Mammary epithelial cell (primary cell): ENCODE measurements at regions of chr5 and their contacts with region 1.

Region 1: GRCh38 chr5:141691867-141692532 is 10.0 kb upstream of the ARAP3 start:
- DNase-seq: peak; percentile 69
- H3K4me3 ChIP-seq: peak overlapping the region in 2 of 3 experiments; percentile 35 to 47
- H3K27ac ChIP-seq: no peak overlapping the region
- H3K4me1 ChIP-seq: peaks cover 4% of the 10 kb centered on the region
- H3K27me3 ChIP-seq: no peaks in the 10 kb centered on the region
- CTCF ChIP-seq: peak; percentile 87 to 96

Region 2: DNA sequence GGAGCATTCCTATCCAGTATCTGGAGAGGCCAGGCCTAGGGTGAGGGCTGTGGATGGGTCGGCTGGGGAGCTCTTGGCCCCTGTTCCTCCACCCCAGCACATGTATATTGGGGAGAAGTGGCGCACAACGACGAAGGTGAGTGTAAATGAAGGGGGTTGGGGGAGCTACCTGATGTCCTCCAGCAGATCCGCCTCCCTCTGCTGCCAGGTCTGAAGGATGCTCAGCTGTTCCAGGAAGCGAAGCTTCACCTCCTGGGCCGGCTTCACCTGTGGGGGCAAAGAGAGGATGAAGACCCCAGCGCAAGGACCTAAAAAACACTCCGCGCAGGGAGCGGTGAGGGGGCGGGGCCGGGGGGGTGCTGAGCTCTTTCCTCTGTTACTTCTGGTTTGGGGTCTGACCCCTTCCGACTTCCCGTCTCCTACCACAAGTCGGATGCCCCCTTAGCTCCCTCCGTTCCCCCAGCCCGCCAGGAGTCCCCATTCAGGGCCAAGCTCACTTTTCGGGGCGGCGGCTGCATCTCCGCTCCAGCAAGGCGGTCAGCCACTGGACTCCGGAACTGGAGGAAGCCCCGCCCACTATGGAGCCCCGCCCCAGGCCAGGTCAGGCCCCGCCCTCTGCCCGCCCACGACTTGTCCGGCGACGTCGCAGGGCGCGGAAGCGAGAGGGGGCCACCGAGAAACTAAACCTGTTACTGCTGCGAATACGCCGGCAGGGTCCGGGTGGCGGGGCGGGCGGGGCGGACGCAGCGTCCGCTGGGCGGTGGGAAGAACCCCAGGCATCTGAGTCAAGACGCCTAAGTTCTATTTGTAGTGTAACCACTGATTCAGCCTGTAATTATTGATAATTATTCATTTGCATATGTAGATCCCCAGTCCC is 40.9 kb before region 1 on chr5 and contains the start of gene FCHSD1:
- CTCF ChIA-PET with region 1: no interaction called
- dilution Hi-C with region 1: loop called (anchors 5 kb)
- in situ Hi-C with region 1: no loop called
- intact Hi-C with region 1: no loop called
- DNase-seq: peak; percentile 64
- H3K4me3 ChIP-seq: peak within 1 kb of the TSS; percentile 63 to 85 (median 77)
- H3K27ac ChIP-seq: no peak within 1 kb of the TSS
- H3K4me1 ChIP-seq: peaks cover 4% of the 10 kb centered on the region
- H3K27me3 ChIP-seq: no peaks in the 10 kb centered on the region
- CTCF ChIP-seq: peak in 1 of 2 donors; percentile 1
- total RNA-seq, gene FCHSD1: 23.7 to 32.0 TPM

Region 3: DNA sequence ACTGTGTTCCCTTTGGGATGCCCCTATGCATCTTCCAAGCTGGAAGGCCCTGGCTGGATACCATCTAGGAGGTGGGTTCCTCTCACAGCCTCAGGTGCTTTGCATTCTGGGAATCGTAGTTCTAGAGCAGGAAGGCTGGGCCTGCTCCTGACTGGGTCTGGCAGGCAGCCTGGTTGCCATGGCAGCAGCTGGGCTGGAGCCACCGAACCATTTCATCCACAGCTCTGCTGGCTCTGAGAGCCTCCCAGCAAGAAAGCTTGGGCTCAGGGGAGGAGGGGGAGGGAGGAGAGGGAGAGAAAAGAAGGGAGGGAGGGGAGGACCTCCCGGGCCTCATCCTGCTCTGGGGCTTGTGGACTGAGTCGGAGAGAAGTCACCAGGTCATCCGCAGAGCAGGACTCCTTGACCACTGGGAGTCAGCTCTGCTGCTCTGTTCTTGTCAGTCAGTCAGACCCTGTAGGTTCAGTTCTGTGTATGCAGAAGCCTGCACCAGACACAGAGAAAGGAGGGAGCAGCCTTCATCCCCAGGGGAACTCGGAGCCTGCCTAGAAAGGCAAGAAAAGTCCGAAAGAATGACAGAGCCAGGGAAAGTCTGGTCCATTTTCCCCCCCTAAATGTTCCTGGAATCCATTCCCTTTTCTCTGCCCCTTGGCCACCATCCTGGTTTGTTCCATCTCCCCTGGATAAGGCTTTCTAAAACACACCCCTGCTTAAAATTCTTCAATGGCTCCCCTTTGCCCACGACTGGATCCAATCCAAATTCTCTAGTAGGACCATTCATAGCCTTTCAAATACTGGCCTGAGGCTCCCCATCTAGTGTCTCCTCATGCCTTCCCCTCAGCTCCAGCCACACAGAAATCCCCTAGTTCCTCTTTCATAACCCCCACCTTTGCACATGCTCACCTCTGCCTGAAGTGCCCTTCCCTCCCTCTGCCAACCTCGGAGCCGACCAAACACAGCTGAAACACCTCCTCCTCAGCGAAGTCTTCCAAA is 55.4 kb after region 1 on chr5:
- CTCF ChIA-PET with region 1: no interaction called
- dilution Hi-C with region 1: no loop called
- in situ Hi-C with region 1: no loop called
- intact Hi-C with region 1: no loop called
- DNase-seq: peak; percentile 17
- H3K4me3 ChIP-seq: no peak overlapping the region
- H3K27ac ChIP-seq: no peak overlapping the region
- H3K4me1 ChIP-seq: no peaks in the 10 kb centered on the region
- H3K27me3 ChIP-seq: peaks cover 2% of the 10 kb centered on the region
- CTCF ChIP-seq: no peak

Region 4: DNA sequence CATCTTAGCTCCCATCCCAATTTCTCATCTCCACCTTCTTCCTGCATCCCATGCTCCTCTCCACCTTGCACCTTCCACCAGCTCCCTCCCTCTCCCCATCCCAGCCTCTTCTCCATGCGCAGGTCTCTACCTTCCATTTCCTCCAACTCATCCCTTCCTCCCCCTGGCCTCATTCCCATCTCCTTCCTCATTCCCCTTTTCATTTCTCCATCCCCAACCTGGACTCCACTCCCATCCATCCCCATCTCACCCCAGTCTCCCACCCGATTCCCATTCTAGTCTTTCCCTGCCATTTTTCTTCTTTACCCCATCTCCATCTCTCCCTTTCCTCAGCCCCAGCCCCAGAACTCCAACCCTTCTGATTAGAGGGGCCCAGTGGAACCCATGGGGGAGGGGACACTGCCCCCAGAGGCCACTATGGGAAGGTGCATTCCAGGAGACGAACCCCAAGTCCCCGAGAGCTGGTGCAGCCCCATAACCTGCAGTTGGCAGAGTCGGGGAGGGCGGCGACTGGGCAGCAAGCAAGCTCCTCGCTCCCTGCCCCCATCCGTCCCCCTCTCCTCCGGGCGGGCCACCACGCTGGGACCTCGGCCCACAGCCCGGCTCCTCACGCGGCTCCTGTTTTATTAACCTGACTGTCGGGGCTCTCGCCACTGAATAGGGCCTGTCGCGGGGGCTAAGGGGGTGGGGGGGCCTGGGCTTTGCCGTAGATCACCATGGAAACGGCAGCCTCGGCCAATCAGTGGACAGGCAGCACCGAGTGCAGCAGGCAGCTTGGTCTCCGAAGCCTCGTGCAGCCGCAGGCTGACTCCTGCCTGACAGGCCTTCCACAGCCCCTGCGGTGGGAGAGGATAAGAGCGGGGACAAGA is 119.5 kb after region 1 on chr5:
- CTCF ChIA-PET with region 1: no interaction called
- dilution Hi-C with region 1: no loop called
- in situ Hi-C with region 1: no loop called
- intact Hi-C with region 1: loop called (anchors 1 kb)
- DNase-seq: no peak
- H3K4me3 ChIP-seq: no peak overlapping the region
- H3K27ac ChIP-seq: no peak overlapping the region
- H3K4me1 ChIP-seq: no peaks in the 10 kb centered on the region
- H3K27me3 ChIP-seq: no peaks in the 10 kb centered on the region
- CTCF ChIP-seq: peak; percentile 55 to 67

Region 5: GRCh38 chr5:141951332-141951781 is 259.4 kb after region 1 on chr5:
- CTCF ChIA-PET with region 1: no interaction called
- dilution Hi-C with region 1: no loop called
- in situ Hi-C with region 1: loop called (anchors 5 to 10 kb)
- intact Hi-C with region 1: no loop called
- DNase-seq: no peak
- H3K4me3 ChIP-seq: no peak overlapping the region
- H3K27ac ChIP-seq: no peak overlapping the region
- H3K4me1 ChIP-seq: no peaks in the 10 kb centered on the region
- H3K27me3 ChIP-seq: no peaks in the 10 kb centered on the region
- CTCF ChIP-seq: peak in 1 of 2 donors; percentile 21

Region 6: DNA sequence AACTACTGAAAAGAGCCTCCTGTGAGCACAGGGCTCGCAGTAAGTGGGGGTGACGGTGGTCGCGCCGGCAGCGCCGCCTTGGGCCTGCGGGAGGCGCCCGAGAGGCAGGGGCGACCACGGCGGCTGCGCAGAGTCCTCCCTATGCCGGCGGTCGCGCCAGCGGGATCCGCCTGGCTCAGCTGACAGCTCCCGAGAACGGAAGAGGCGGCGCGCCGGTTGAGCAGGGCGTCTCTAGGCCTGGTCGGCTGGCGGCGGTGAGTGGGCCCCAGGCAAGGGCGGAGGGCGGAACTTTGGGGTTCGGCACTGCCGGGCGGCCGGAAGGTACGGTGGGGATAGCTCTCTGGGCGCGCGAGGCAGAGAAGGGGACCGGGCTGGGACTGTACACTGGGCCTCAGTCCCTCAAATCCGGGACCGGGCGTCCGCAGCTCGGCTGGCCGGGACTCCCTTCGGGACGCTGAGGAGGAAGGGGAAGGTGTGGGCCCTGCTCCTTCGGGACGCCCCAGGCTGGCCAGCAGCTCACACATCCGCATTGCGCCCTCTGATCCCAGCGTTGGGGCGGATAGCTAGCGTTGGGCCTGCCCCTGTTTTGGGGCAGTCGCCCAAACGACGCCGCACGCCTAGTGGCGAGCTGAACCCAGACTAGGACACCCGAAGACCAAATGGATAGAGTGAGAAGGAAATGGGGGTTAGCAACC is 277.1 kb after region 1 on chr5 and contains the start of gene RNF14:
- CTCF ChIA-PET with region 1: no interaction called
- dilution Hi-C with region 1: no loop called
- in situ Hi-C with region 1: no loop called
- intact Hi-C with region 1: loop called (anchors 2 kb)
- DNase-seq: peak; percentile 93
- H3K4me3 ChIP-seq: peak within 1 kb of the TSS; percentile 48 to 87 (median 67)
- H3K27ac ChIP-seq: peak within 1 kb of the TSS; percentile 77
- H3K4me1 ChIP-seq: peaks cover 16% of the 10 kb centered on the region
- H3K27me3 ChIP-seq: no peaks in the 10 kb centered on the region
- CTCF ChIP-seq: peak; percentile 72 to 88
- total RNA-seq, gene RNF14: 60.4 to 93.7 TPM

Region 7: GRCh38 chr5:142108432-142109330 is 416.7 kb after region 1 on chr5 and contains the start of gene NDFIP1:
- CTCF ChIA-PET with region 1: no interaction called
- dilution Hi-C with region 1: no loop called
- in situ Hi-C with region 1: loop called in 1 of 2 experiments (anchors 25 kb)
- intact Hi-C with region 1: no loop called
- DNase-seq: peak; percentile 83
- H3K4me3 ChIP-seq: peak within 1 kb of the TSS; percentile 74 to 84 (median 78)
- H3K27ac ChIP-seq: peak within 1 kb of the TSS; percentile 80
- H3K4me1 ChIP-seq: peaks cover 14% of the 10 kb centered on the region
- H3K27me3 ChIP-seq: no peaks in the 10 kb centered on the region
- CTCF ChIP-seq: no peak
- total RNA-seq, gene NDFIP1: 40.4 to 120 TPM